AG04449 (cell line): ENCODE measurements at regions of chr19 and their contacts with region 1.

Region 1: DNA sequence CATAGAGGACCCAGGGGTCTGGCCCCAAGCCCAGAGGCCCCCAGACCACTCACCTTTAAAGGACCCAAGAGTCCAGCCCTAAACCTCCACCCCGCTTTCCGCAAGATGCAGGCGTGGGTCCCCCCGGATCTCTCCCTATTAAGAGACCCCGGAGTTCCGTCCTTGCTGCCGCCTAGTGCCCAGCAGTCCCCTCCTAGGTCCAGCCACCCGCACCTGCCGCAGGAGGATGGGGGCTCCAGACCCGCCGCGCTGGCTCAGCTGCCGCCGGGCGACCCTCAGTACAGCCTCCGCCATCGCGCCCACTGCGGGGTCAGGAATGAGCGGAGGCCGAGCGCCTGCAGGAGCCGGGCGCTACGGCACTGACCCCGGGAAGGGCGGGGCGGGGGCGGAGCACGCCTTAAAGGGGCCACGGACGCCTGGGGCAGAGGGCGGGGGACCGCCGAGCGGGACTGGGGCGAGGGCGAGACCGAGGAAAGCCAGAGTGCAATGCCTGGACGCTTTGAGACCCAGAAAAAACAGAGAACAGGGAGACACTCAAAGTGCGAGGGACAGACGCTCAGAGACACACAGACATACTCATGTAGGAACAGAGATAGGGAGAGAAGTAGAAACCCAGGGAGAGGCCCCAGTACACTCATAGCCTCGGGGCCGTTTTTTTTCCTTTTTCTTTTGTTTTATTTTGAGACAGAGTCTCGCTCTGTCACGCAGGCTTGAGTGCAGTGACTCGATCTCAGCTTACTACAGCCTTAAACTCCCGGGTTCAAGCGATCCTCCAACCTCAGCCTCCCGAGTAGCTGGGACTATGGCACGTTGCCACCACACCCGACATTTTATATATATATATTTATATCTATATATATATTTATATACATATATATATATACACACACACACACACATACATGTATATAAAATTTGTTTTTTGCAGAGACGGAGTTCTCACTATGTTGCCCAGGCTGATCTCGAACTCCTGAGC is at the start of gene ETHE1:
- DNase-seq: no peak
- H3K4me3 ChIP-seq: peak within 1 kb of the TSS; percentile 85
- CTCF ChIP-seq: no peak

Region 2: GRCh38 chr19:43433358-43433673 is 93.9 kb before region 1 on chr19:
- CTCF ChIA-PET with region 1: interaction called, 67 read pairs
- POLR2A ChIA-PET with region 1: no interaction called
- DNase-seq: no peak
- H3K4me3 ChIP-seq: no peak overlapping the region
- CTCF ChIP-seq: no peak

Region 3: GRCh38 chr19:43619262-43620060 is 92.3 kb after region 1 on chr19 and contains the start of gene ZNF428:
- CTCF ChIA-PET with region 1: no interaction called
- POLR2A ChIA-PET with region 1: no interaction called
- DNase-seq: no peak
- H3K4me3 ChIP-seq: peak within 1 kb of the TSS; percentile 81
- CTCF ChIP-seq: no peak